Heart right ventricle (tissue), 16 donors: ENCODE measurements at regions of chr5 and their contacts with region 1.

Region 1: GRCh38 chr5:107673368-107674136 is 2.8 kb upstream of the EFNA5 start:
- DNase-seq: peak; percentile 81 to 84
- ATAC-seq: peak; percentile 46 to 75 (median 63)
- H3K4me3 ChIP-seq: peak overlapping the region; percentile 22 to 73 (median 62)
- H3K27ac ChIP-seq: peak overlapping the region; percentile 64 to 93 (median 85)
- H3K4me1 ChIP-seq: peaks cover 0 to 40% (median 33%) of the 10 kb centered on the region in 9 donors
- H3K27me3 ChIP-seq: peaks cover 0 to 93% (median 31%) of the 10 kb centered on the region in 7 donors
- CTCF ChIP-seq: peak; percentile 74 to 96 (median 93)

Region 2: DNA sequence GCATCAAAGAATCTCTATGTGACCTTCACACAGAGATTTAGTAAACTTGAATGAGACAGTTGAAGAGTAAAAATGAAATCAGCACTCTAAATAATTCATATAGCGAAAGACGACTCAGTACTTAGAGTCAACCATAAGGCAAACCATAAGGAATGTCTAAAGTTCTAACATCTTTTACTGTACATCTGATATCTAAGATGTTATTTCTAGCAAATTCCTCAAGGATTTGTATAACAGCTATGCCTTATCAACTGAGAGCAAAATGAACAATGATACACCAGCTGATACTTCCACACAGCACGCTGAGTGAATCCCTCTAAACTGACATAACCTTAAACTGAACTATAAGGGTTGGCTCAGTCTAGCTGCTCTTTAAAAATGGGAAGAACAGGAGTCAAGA is 763.1 kb before region 1 on chr5:
- intact Hi-C with region 1: loop called in 1 of 10 experiments (anchors 10 kb)
- DNase-seq: no peak
- ATAC-seq: no peak
- H3K4me3 ChIP-seq: no peak overlapping the region
- H3K27ac ChIP-seq: no peak overlapping the region
- H3K4me1 ChIP-seq: no peaks in the 10 kb centered on the region
- H3K27me3 ChIP-seq: no peaks in the 10 kb centered on the region
- CTCF ChIP-seq: no peak

Region 3: DNA sequence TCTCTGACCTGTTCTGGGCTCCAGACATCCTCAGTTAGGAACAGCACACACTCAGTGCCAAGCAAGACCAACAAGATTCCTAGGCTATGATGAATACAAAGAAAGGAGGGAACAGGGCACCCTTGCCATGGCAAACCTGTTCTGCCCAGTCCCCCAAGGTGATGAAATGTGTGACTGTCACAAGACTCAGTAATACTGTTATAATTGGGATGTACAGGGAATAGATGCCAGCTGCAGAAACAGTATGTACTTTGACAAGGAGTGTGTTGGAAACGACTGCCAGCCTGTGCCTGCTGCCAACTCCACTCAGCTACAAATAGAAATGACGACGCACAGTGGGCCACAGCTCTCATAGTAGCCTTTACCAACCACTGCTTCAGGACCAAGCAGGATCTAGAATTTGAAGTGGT is 455.8 kb before region 1 on chr5:
- intact Hi-C with region 1: loop called in 6 of 10 experiments (anchors 5 to 10 kb)
- DNase-seq: peak; percentile 64 to 79
- ATAC-seq: peak; percentile 88 to 99 (median 97)
- H3K4me3 ChIP-seq: no peak overlapping the region
- H3K27ac ChIP-seq: peak overlapping the region; percentile 55 to 83 (median 72)
- H3K4me1 ChIP-seq: peaks cover 0 to 35% (median 7%) of the 10 kb centered on the region in 9 donors
- H3K27me3 ChIP-seq: no peaks in the 10 kb centered on the region
- CTCF ChIP-seq: no peak

Region 4: DNA sequence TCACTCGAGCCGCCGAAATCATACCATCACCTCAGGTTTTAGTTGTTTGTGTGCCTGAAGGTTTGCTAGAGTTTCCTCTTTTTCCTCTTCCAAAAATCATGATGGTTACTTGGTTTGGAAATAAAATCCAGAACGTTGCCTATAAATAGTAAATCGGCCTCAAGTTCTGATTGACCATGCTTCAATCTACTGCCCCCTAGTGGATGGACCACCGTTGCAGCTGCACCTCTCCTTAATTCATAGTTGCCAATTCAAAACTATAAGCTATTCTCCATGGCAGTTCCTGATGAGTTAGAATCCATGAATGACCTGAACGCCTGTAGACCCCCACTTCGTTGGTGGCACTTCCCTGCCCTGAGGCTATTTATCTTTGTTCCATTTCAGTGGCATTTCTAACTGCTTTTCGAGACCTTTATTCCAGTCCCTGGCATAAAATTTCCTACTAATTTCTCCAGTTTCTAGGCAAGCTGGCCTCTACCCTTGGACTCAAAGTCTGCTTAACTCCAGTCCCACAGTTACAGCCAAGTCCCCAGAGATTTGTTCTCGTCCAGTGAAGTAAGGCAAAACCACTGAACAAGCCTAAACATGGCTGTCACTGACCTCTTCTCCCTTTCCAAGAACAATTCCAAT is 425.4 kb before region 1 on chr5:
- intact Hi-C with region 1: loop called in 1 of 10 experiments (anchors 10 kb)
- DNase-seq: peak; percentile 14 to 29
- ATAC-seq: peak in 1 of 8 donors; percentile 45
- H3K4me3 ChIP-seq: no peak overlapping the region
- H3K27ac ChIP-seq: no peak overlapping the region
- H3K4me1 ChIP-seq: no peaks in the 10 kb centered on the region
- H3K27me3 ChIP-seq: no peaks in the 10 kb centered on the region
- CTCF ChIP-seq: peak; percentile 35 to 76 (median 61)

Region 5: DNA sequence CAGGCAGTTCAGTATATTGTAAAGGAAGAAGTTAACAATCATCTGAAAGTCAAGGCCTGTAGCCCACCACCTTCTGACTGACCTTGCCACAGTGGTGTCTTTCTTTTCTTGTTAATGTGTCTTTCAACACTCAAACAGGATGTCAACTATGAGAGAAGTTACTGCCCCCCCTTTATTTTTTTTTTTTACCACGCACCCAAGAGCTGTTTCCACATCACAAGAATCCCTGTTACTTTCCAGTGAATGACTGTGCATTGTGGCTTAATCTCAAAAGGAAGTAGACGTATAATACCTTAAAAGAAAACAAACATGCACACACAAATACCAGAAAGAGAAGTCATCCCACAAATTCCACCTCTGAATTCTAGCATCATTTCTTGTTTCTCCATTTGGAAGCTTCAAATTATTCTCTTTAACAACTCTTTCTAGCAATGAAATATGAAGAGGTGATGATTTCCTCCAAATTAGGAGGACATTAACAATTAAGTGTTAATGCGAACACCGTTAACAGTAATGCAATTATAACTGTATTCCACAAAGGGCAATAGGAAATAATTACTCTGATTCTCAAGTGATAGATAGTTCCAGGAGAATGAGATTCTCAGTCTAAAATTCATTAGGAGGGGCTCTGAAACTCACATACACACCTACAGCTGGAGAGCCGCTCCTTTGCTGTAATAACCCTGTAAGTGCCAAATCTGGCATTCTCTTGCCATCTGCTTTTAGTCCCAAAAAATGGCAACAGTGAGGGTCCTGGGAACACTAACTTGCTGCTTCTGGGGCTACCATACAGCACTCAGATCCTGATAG is 203.9 kb before region 1 on chr5:
- intact Hi-C with region 1: loop called in 1 of 10 experiments (anchors 10 kb)
- DNase-seq: no peak
- ATAC-seq: peak in 2 of 8 donors; percentile 23 to 29
- H3K4me3 ChIP-seq: no peak overlapping the region
- H3K27ac ChIP-seq: peak overlapping the region in 8 of 10 donors; percentile 8 to 66 (median 50)
- H3K4me1 ChIP-seq: peaks cover 0 to 60% (median 28%) of the 10 kb centered on the region in 9 donors
- H3K27me3 ChIP-seq: no peaks in the 10 kb centered on the region
- CTCF ChIP-seq: no peak

Region 6: GRCh38 chr5:107594253-107595045 is 79.1 kb before region 1 on chr5:
- intact Hi-C with region 1: loop called in 1 of 10 experiments (anchors 5 kb)
- DNase-seq: no peak
- ATAC-seq: peak in 7 of 8 donors; percentile 20 to 87 (median 78)
- H3K4me3 ChIP-seq: no peak overlapping the region
- H3K27ac ChIP-seq: peak overlapping the region in 8 of 10 donors; percentile 19 to 69 (median 54)
- H3K4me1 ChIP-seq: peaks cover 0 to 30% (median 13%) of the 10 kb centered on the region in 9 donors
- H3K27me3 ChIP-seq: no peaks in the 10 kb centered on the region
- CTCF ChIP-seq: no peak

Region 7: GRCh38 chr5:107887166-107887943 is 213.8 kb after region 1 on chr5:
- intact Hi-C with region 1: no loop called
- DNase-seq: no peak
- ATAC-seq: peak in 2 of 8 donors; percentile 37 to 57
- H3K4me3 ChIP-seq: peak overlapping the region in 1 of 10 donors; percentile 11
- H3K27ac ChIP-seq: no peak overlapping the region
- H3K4me1 ChIP-seq: peaks cover 0 to 14% (median 6%) of the 10 kb centered on the region in 9 donors
- H3K27me3 ChIP-seq: no peaks in the 10 kb centered on the region
- CTCF ChIP-seq: no peak